Activated CD4-positive, alpha-beta memory T cell treated with anti-CD3 and anti-CD28 coated beads, Interleukin-2, amount 10 ng/mL, durations not matched to agents 7 days and 5 days (primary cell): ENCODE measurements at regions of chr9 and their contacts with region 1.

Region 1: GRCh38 chr9:89497978-89498851 is at the start of gene SEMA4D:
- DNase-seq: peak; percentile 73
- H3K4me3 Mint-ChIP-seq: peak within 1 kb of the TSS; percentile 95
- H3K27ac Mint-ChIP-seq: peak within 1 kb of the TSS; percentile 96
- H3K4me1 Mint-ChIP-seq: peaks cover 83% of the 10 kb centered on the region
- H3K27me3 Mint-ChIP-seq: no peaks in the 10 kb centered on the region
- total RNA-seq, gene SEMA4D: 339 to 350 TPM

Region 2: DNA sequence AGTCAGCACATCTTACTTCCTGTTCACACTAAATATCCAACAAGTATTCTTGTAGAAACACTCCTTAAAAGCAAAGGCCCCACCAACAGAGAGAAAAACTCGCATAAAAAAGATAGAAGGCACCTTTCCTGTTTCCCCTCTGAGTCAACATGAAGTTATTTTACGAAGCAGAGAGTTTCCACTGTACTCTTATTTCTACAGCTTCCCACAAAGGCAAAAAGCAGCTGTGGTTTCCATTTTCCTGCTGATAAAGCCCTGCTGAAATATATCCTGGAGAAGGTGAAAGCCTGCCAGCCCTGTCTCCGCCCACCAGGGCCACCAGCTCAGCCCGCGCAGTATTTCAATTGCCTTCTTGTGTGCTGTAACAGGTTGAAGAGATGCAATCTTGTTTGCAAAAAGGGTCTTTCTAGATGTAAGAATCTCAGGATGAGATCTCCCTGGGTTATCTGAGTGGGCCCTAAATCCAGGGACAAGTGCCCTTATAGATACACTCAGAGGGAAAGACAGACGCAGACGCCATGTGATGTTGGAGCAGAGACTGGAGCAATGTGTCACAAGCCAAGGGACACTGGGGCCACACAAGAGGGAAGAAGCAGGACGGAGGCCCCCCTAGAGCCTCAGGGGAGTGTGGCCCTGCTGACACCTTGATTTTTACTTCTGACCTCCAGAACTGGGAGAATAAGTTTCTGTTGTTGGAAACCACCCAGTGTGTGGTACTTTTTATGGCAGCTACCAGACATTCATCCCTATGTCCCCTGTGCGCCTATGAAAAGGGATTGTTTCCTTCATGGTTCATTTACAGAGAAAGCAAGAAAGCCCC is 20.2 kb before region 1 on chr9:
- CTCF ChIA-PET with region 1: no interaction called
- POLR2A ChIA-PET with region 1: interaction called, 23 read pairs
- DNase-seq: peak; percentile 66
- H3K4me3 Mint-ChIP-seq: peak overlapping the region; percentile 60
- H3K27ac Mint-ChIP-seq: peak overlapping the region; percentile 87
- H3K4me1 Mint-ChIP-seq: peaks cover 88% of the 10 kb centered on the region
- H3K27me3 Mint-ChIP-seq: no peaks in the 10 kb centered on the region

Region 3: DNA sequence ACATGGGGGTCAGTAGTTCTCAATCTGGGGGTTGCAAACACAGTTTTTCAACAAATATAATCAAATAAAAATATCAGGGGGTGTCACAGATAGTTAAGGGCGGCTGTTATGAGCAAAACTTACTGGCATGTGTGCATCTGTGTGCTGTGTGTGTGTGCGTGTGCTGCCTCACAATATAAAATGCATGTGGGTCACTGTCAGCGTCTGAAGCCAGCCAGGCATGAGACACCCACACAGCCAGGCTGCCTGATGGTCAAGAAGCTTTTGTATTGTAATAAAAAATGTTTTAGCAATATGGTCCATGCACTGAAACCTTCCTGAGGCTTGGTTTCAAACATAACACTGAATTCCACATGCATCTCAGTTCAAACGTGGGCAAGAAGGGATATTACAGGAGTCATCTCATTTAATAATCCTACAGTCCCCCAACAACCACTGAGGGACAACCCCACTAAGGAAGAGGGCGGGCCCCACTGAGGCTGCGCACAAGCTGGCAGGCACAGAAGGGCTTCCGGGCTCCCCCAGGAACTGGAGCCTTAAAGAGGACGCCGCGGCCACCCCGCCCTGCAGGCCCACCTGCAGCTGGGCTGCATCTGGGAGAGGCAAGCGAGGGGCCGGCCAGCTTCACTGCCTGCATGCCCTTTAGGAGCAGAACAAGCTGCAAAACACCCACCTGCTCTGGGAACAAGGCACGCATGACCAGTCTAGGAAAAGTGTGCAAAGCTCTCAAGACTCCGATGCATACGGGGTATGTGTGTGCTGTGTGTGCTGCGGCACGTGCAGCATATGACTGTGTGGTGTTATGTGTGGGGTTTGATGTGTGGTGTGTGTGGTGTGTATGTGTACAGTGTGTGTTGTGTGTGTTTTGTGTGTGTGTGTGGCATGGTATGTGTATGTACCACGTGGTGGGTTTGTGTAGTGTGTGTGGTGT is 14.4 kb before region 1 on chr9:
- CTCF ChIA-PET with region 1: interaction called, 3 read pairs
- POLR2A ChIA-PET with region 1: interaction called, 23 read pairs
- DNase-seq: peak; percentile 67
- H3K4me3 Mint-ChIP-seq: peak overlapping the region; percentile 80
- H3K27ac Mint-ChIP-seq: peak overlapping the region; percentile 89
- H3K4me1 Mint-ChIP-seq: peaks cover 90% of the 10 kb centered on the region
- H3K27me3 Mint-ChIP-seq: no peaks in the 10 kb centered on the region

Region 4: DNA sequence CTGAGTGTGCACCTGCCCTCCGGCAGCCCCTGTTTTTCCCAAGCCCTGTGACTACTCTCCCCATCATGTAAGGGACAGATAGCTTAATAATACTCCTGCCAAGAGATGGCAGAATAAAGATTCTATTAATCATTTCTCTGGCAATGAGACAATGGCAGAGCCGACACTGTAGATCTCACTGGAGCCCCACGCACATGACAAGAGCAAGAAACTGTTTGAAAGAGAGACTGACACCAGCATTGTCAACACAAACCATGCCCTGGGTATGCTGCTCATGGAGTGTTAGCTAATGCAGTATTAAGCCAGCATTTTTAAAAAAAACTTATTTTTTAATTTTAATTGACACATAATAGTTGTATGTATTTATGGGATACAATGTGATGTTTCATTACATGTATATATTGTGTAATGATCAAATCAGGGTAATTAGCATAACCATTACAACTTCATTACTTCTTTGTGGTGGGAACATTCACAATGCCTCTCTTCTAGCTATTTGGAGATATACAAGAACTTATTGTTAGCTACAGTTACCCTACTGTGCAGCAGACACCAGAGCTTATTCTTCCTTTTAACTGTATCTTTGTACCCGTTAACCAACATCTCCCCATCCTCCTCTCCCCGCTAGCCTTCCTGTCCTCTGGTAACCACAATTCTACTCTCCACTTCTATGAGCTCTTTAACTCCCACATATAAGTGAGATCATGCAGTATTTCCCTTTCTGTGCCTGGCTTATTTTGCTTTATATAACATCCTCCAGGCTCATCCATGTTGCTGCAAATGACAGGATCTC is 31.2 kb after region 1 on chr9:
- CTCF ChIA-PET with region 1: interaction called, 4 read pairs
- POLR2A ChIA-PET with region 1: interaction called, 77 read pairs
- DNase-seq: no peak
- H3K4me3 Mint-ChIP-seq: no peak overlapping the region
- H3K27ac Mint-ChIP-seq: peak overlapping the region; percentile 22
- H3K4me1 Mint-ChIP-seq: peaks cover 94% of the 10 kb centered on the region
- H3K27me3 Mint-ChIP-seq: no peaks in the 10 kb centered on the region

Region 5: DNA sequence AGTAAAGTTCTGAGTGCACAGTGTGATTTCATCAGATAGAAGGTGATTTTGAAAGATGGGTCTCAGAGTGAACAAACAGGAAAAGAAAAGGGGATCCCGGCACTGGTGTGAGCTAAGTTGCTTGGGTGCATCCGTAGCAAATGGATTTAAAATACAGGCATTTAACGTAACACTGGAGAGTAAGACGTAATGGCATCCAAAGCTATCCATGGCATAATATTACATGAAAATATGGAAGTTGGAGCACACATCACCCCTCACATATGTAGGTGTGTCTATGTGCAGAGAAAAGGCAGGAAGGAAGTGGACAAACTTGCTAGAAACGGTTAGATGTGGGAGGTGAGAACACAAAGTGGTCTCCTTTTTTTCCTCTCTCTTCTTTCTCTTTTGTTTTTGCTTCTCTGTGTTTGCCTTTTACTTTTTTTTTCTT is 37.9 kb after region 1 on chr9:
- CTCF ChIA-PET with region 1: interaction called, 3 read pairs
- POLR2A ChIA-PET with region 1: interaction called, 16 read pairs
- DNase-seq: peak; percentile 24
- H3K4me3 Mint-ChIP-seq: peak overlapping the region; percentile 53
- H3K27ac Mint-ChIP-seq: peak overlapping the region; percentile 90
- H3K4me1 Mint-ChIP-seq: peaks cover 81% of the 10 kb centered on the region
- H3K27me3 Mint-ChIP-seq: no peaks in the 10 kb centered on the region

Region 6: DNA sequence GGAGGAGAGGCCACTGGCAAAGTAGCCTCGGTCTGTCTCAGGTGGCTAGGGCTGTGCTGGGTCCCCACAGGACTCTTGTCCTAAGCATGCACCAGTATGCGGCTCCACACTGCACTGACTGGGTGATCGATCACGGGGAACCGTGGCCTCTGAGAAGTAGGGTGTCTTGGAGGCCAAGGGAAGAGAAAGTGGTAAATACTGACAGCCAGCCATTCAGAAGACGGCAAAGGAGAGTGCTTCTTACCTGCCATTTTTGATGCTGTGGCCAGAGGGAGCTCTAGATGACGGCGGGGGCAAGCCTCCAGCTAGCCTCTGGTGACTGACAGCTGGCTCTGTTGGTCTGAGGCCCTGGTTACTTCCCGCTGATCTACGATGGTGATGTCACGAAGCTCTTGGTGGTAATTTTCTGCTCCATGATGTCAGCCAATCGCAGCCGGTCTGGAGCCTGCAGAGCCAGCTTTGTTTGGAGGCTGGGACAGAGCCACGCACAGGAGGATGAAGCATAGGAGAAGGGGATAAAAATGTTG is 66.2 kb after region 1 on chr9:
- CTCF ChIA-PET with region 1: no interaction called
- POLR2A ChIA-PET with region 1: no interaction called
- DNase-seq: no peak
- H3K4me3 Mint-ChIP-seq: no peak overlapping the region
- H3K27ac Mint-ChIP-seq: no peak overlapping the region
- H3K4me1 Mint-ChIP-seq: peaks cover 2% of the 10 kb centered on the region
- H3K27me3 Mint-ChIP-seq: peaks cover 42% of the 10 kb centered on the region